ENCODE measurements at regions of chr15 and their contacts with region 1.

Region 1: DNA sequence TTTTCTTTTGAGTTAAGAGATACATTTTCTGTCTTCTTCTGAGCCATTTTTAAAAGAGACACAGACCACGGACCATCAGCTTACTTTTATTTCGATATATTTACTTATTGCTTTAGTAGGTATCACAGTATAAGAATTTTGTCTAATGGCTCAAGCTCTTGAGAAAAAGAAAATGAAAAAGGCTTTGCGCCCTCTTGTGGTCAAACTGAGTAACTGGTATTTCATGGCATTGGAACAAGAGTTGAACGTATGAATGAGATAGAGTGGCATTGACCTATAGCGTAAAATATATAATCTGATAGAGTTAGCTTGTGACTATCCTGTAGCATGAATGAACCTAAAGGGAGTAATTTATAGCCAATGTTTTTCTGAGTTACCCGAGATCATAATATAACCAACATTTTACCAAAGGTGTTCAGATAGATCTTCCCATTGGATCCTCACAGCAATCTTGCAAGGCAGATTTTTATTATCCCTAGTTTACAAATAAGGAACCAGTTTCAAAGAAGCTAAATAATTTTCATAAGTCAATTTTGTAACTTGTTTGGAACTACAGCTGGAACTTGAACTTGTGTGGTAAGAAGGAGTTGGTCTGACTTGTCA is 154.6 kb downstream of the POLR2M start:
- DNase-seq: no peak
- ATAC-seq: peak; percentile 43 to 68

Region 2: GRCh38 chr15:57732526-57733331 is 128.4 kb before region 1 on chr15:
- intact Hi-C with region 1: loop called in 1 of 2 experiments (anchors 5 kb)
- DNase-seq: peak; percentile 53
- ATAC-seq: peak; percentile 68 to 69

Region 3: GRCh38 chr15:57751177-57751800 is 109.8 kb before region 1 on chr15:
- intact Hi-C with region 1: loop called (anchors 5 kb)
- DNase-seq: no peak
- ATAC-seq: peak; percentile 49 to 65

Measured in left cardiac atrium (tissue), 4 donors.